ENCODE measurements at regions of chr2 and their contacts with region 1.

Region 1: GRCh38 chr2:178280244-178280852 is 86.0 kb downstream of the OSBPL6 start:
- DNase-seq: peak; percentile 69
- H3K4me3 Mint-ChIP-seq: no peak overlapping the region
- H3K27ac Mint-ChIP-seq: no peak overlapping the region
- H3K4me1 Mint-ChIP-seq: peaks cover 47% of the 10 kb centered on the region
- H3K27me3 Mint-ChIP-seq: no peaks in the 10 kb centered on the region
- CTCF ChIP-seq: peak; percentile 71

Region 2: GRCh38 chr2:178298785-178299212 is 18.5 kb after region 1 on chr2:
- CTCF ChIA-PET with region 1: interaction called, 6 read pairs
- POLR2A ChIA-PET with region 1: interaction called, 18 read pairs
- intact Hi-C with region 1: no loop called
- DNase-seq: peak; percentile 94
- H3K4me3 Mint-ChIP-seq: peak overlapping the region; percentile 62
- H3K27ac Mint-ChIP-seq: peak overlapping the region; percentile 89
- H3K4me1 Mint-ChIP-seq: peaks cover 22% of the 10 kb centered on the region
- H3K27me3 Mint-ChIP-seq: no peaks in the 10 kb centered on the region
- CTCF ChIP-seq: no peak

Measured in MCF 10A (cell line).